Activated CD4-positive, alpha-beta memory T cell treated with anti-CD3 and anti-CD28 coated beads, Interleukin-2, amount 10 ng/mL, durations not matched to agents 7 days and 5 days (primary cell): ENCODE measurements at regions of chr5 and their contacts with region 1.

Region 1: GRCh38 chr5:14664302-14665100 is at the start of gene OTULIN:
- DNase-seq: peak; percentile 93
- H3K4me3 Mint-ChIP-seq: peak within 1 kb of the TSS; percentile 88
- H3K27ac Mint-ChIP-seq: peak within 1 kb of the TSS; percentile 98
- H3K4me1 Mint-ChIP-seq: peaks cover 70% of the 10 kb centered on the region
- H3K27me3 Mint-ChIP-seq: no peaks in the 10 kb centered on the region
- total RNA-seq, gene OTULIN: 69.6 to 71.7 TPM

Region 2: GRCh38 chr5:14331386-14331781 is 333.1 kb before region 1 on chr5:
- CTCF ChIA-PET with region 1: no interaction called
- POLR2A ChIA-PET with region 1: no interaction called
- DNase-seq: peak; percentile 22
- H3K4me3 Mint-ChIP-seq: no peak overlapping the region
- H3K27ac Mint-ChIP-seq: no peak overlapping the region
- H3K4me1 Mint-ChIP-seq: peaks cover 17% of the 10 kb centered on the region
- H3K27me3 Mint-ChIP-seq: peaks cover 5% of the 10 kb centered on the region

Region 3: DNA sequence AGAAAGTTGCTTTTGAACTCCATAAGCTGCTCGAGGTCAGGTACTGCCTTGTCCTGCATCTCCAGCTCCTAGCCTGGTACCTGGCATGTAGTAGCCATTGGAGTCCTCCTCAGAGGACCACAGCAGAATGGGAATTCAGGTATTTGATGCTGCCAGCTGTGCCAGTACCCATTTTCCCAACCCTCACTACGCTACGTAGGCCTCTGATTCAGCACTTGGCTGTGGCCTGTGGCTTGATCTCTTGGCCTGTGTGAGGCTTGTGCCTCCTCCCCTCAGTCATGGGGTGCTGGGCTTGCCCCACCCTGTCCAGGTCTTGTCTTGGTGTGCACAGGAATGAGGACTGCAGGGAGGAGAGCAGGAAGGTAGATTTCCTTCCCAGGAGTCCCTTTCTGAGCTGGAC is 11.8 kb after region 1 on chr5:
- CTCF ChIA-PET with region 1: interaction called, 7 read pairs
- POLR2A ChIA-PET with region 1: interaction called, 19 read pairs
- DNase-seq: peak; percentile 68
- H3K4me3 Mint-ChIP-seq: peak overlapping the region; percentile 64
- H3K27ac Mint-ChIP-seq: peak overlapping the region; percentile 92
- H3K4me1 Mint-ChIP-seq: peaks cover 72% of the 10 kb centered on the region
- H3K27me3 Mint-ChIP-seq: no peaks in the 10 kb centered on the region

Region 4: DNA sequence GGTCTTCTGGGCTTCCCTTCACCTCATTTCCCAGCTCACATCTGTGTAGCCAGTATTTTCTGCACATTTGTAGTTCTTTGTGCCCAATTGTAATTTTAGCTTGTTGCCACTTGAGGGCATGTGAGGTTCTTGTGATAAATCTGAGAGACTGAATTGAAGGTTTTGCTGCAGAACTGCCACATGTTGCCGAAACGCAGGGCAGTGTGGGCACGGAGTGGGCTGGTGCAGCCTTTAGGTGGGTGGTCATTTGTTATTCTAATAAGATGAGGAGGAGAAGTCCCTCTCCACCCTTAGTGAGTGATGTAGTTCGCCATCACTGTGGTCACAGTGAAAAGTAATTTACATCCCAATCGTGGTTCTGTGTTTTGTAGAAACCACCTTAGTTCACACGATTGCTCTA is 21.3 kb after region 1 on chr5:
- CTCF ChIA-PET with region 1: interaction called, 25 read pairs
- POLR2A ChIA-PET with region 1: interaction called, 5 read pairs
- DNase-seq: peak; percentile 42
- H3K4me3 Mint-ChIP-seq: no peak overlapping the region
- H3K27ac Mint-ChIP-seq: peak overlapping the region; percentile 21
- H3K4me1 Mint-ChIP-seq: peaks cover 15% of the 10 kb centered on the region
- H3K27me3 Mint-ChIP-seq: no peaks in the 10 kb centered on the region

Region 5: GRCh38 chr5:14706615-14707021 is 42.1 kb after region 1 on chr5:
- CTCF ChIA-PET with region 1: interaction called, 3 read pairs
- POLR2A ChIA-PET with region 1: interaction called, 12 read pairs
- DNase-seq: peak; percentile 47
- H3K4me3 Mint-ChIP-seq: peak overlapping the region; percentile 69
- H3K27ac Mint-ChIP-seq: peak overlapping the region; percentile 100
- H3K4me1 Mint-ChIP-seq: peaks cover 80% of the 10 kb centered on the region
- H3K27me3 Mint-ChIP-seq: no peaks in the 10 kb centered on the region

Region 6: DNA sequence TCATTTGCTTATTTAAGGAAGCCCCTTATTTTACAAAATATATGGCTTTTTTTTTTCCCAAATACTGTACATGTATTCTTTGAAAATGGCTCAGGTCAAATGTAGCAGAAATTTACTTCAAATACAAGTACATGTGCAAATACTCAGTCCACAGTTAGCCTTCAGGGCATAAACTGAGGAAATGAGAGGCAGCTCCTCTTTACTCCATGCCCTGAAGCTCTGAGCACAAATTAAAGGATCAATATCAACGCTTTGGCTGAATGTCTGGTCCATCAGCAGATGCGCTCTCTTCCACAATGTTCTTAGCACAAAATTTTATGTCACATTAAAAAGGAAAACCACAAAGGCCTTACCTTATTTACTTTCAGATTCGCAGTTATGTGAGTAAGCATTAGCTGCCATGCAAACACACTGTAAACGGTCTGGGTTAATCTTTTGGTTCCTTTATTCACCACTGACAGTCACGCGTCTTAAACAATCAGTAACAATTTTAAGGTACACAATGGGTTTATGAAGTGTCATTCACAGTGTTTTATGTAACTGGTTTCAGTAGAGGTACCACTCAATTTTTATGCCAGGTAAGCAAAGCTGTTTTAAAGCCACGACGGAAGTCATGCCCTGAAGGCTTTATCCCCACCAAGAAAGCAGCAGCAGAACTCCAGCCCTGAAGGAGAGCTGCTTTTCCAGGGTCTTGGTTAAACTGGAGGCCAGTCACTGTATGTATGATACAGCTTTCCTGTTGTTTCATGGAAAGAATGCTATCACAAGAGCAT is 103.4 kb after region 1 on chr5:
- CTCF ChIA-PET with region 1: no interaction called
- POLR2A ChIA-PET with region 1: no interaction called
- DNase-seq: no peak
- H3K4me3 Mint-ChIP-seq: no peak overlapping the region
- H3K27ac Mint-ChIP-seq: peak overlapping the region; percentile 16
- H3K4me1 Mint-ChIP-seq: peaks cover 25% of the 10 kb centered on the region
- H3K27me3 Mint-ChIP-seq: no peaks in the 10 kb centered on the region